Heart right ventricle (tissue), 16 donors: ENCODE measurements at regions of chr1 and their contacts with region 1.

Region 1: DNA sequence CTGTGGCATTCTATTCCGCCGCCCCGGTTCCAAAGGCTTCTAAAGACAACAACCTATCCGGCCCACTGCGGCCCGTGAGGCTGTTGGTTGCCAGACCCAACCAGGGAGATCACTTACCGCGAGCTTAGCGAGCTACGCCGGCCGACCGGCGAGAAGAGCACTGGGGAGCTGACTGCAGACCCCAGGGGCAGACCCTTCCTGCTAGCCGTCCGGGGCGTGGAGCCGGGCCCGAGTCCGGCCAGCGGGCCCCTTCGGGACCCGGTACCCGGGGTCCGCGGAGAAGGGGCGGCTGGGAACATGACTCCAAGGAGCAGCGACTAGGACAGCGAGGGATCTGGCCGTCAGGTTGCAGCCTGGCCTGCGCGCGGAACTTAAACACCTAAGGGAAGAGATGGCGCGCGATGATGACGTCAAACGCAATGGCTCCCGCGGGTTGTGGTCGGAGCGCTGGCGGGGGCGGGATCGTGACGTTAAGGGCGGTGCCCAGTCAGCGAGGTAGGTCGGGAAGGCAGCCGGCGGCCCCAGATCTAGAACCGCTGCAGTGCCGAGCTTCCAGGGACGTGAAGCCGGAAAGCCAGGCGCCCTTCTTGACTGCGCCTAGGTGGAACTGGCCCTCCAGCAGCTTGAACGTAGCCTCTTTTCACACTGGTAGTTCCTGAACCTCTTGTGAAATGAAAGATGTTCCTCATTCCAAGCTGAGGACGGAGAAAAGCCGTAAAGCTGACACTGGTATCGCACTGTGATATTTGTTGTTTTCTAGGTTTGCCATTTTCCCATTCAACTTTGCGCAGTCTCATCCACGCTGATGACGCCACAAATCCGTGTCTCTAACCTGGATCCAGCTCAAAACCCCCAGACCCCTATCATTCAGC is at the start of gene NUP133:
- DNase-seq: peak; percentile 99
- ATAC-seq: peak; percentile 98 to 99 (median 99)
- H3K4me3 ChIP-seq: peak within 1 kb of the TSS; percentile 78 to 100 (median 97)
- H3K27ac ChIP-seq: peak within 1 kb of the TSS; percentile 76 to 98 (median 92)
- H3K4me1 ChIP-seq: peaks cover 3 to 26% (median 20%) of the 10 kb centered on the region in 9 donors
- H3K27me3 ChIP-seq: no peaks in the 10 kb centered on the region
- CTCF ChIP-seq: no peak
- total RNA-seq, gene NUP133: 28.1 to 36.3 (median 31.4) TPM

Region 2: GRCh38 chr1:228921481-228921880 is 586.7 kb before region 1 on chr1:
- intact Hi-C with region 1: no loop called
- DNase-seq: no peak
- ATAC-seq: peak in 3 of 8 donors; percentile 28 to 62 (median 39)
- H3K4me3 ChIP-seq: no peak overlapping the region
- H3K27ac ChIP-seq: peak overlapping the region in 1 of 10 donors; percentile 63
- H3K4me1 ChIP-seq: peaks cover 0 to 25% (median 0%) of the 10 kb centered on the region in 9 donors
- H3K27me3 ChIP-seq: no peaks in the 10 kb centered on the region
- CTCF ChIP-seq: no peak

Region 3: GRCh38 chr1:229279242-229279641 is 228.9 kb before region 1 on chr1:
- intact Hi-C with region 1: loop called in 2 of 10 experiments (anchors 5 kb)
- DNase-seq: no peak
- ATAC-seq: no peak
- H3K4me3 ChIP-seq: no peak overlapping the region
- H3K27ac ChIP-seq: no peak overlapping the region
- H3K4me1 ChIP-seq: peaks cover 0 to 50% (median 30%) of the 10 kb centered on the region in 9 donors
- H3K27me3 ChIP-seq: no peaks in the 10 kb centered on the region
- CTCF ChIP-seq: no peak

Region 4: DNA sequence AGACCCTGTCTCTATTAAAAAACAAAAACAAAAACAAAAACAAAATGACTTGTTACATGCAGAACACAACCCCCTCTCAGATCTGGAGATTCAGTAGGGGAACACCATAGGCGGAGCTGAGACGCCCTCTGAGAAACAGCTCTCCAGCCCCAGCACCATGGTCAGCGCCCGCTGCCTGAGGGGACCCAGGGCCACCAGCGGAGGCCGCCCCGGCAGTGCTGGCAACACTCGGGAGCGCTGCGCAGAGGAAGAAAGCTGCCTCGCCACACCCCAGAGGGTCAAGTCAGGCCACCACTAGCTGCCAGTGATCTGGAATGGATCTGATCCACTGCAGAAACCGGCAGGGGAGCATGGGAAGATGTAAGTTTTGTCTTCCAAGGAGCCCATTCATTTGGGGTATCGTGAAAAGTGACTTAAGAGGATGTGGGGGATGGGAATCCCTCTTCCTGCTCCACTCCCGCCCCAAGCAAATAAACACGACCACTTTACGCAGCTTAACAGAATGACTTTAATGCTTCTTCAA is 77.4 kb before region 1 on chr1:
- intact Hi-C with region 1: no loop called
- DNase-seq: peak; percentile 73
- ATAC-seq: peak; percentile 10 to 78 (median 36)
- H3K4me3 ChIP-seq: peak overlapping the region in 6 of 10 donors; percentile 29 to 65 (median 59)
- H3K27ac ChIP-seq: peak overlapping the region in 5 of 10 donors; percentile 20 to 99 (median 92)
- H3K4me1 ChIP-seq: peaks cover 0 to 30% (median 24%) of the 10 kb centered on the region in 9 donors
- H3K27me3 ChIP-seq: peaks cover 15 to 100% (median 79%) of the 10 kb centered on the region in 7 donors
- CTCF ChIP-seq: peak in 1 of 9 donors; percentile 16

Region 5: DNA sequence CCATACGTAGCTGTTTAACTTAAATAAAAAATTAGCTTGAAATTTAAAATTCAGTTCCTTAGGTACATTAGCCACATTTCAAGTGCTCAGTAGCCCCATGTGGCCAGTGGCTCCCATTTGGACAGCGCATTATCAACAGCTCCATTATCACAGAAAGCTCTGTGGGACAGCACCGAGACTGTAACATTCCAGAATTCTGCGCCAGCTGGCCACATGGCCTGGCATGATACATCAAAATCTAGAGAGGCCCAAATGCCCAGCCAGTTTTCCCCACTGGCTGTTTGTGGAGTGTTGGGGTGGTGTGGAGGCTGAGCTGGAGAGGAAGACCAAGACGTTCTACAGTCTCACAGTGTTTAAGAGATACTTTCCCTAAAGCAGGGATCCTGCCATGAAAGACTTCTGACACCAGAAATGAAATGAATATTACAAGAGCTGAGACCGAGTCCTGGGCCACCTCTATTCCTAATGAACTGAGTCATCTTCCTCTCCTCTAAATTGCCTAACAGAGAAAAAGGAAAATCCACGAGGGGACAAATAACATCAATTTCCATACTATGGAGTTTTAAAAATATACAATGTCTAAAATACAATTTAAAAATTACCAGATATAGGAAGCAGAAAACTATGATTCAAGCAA is 47.0 kb before region 1 on chr1:
- intact Hi-C with region 1: no loop called
- DNase-seq: peak; percentile 51 to 57
- ATAC-seq: peak; percentile 77 to 96 (median 94)
- H3K4me3 ChIP-seq: no peak overlapping the region
- H3K27ac ChIP-seq: peak overlapping the region in 7 of 10 donors; percentile 13 to 73 (median 67)
- H3K4me1 ChIP-seq: peaks cover 0 to 6% (median 0%) of the 10 kb centered on the region in 9 donors
- H3K27me3 ChIP-seq: no peaks in the 10 kb centered on the region
- CTCF ChIP-seq: no peak

Region 6: DNA sequence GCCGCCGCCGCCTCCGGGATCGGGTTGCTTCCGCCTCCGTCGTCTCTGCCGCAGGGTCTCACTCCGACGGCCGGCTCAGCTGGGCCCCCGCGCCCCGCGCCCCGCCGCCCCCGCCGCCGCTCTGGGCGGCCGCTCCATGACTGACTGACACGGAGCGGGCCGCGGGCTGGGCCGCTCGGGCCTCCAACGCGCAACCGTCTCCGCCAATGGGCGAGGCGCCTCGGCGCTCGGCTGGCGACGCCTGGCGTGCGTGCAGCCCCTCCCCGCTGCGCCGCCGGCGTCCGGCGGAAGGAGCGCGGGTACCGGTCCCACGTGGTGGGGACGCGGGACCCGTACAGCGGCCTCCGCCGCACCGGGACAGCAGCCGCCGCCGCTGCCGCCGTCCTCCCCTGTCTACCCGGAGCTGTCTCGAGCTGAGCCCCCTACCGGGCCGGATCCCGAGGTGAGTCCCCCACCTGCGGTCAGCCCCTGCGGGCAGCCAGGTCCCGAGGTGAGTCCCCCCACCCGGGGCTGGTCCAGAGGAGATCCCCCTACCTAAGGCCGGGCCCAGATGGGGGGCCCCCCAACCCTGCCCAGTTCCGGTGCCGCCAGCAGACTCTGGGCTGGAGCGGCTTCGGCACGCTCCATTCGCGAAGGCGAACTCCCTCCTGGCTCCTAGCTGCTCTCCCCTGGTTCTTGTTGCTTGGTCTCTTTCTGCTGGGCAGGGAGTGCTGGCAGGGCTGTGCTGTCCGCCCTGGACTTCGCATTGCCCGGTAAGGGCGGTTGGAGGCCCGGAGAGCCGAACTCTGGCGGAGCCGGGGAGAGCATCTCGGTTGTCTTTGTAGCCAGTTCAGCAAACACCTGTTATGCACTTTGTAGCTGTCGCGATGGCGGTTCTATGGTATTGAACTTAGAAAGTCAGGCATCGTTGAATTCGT is 118.0 kb after region 1 on chr1 and contains the starts of genes TAF5L and URB2:
- intact Hi-C with region 1: loop called in 1 of 10 experiments (anchors 5 kb)
- DNase-seq: peak; percentile 84 to 88
- ATAC-seq: peak; percentile 96 to 99 (median 98)
- H3K4me3 ChIP-seq: peak within 1 kb of the TSS; percentile 70 to 99 (median 94)
- H3K27ac ChIP-seq: peak within 1 kb of the TSS; percentile 85 to 95 (median 92)
- H3K4me1 ChIP-seq: peaks cover 10 to 57% (median 38%) of the 10 kb centered on the region in 9 donors
- H3K27me3 ChIP-seq: no peaks in the 10 kb centered on the region
- CTCF ChIP-seq: no peak
- total RNA-seq, gene TAF5L: 9.7 to 13.7 (median 11.2) TPM
- total RNA-seq, gene URB2: 2.9 to 5.6 (median 4.4) TPM